ENCODE measurements at regions of chr12 and their contacts with region 1.

Region 1: DNA sequence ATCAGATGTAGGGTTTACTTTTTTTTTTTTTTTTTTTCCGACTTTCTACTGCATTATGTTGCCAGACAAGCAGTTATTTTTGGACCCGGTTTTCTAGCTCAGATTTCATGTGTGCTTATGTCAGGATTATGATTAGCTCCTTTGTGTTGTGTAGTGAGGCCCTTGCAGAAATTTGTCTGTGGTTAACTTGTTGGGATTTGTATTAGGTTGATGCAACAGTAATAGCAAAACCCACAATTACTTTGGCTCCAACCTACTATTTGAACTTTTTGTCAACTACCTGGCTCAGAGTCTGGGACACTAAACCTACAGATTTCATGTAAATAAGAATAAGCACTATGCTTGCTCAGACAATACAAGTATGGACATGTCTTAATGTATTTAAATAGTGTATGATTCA is 44.1 kb upstream of the KCNJ8 start:
- DNase-seq: peak; percentile 67
- H3K4me3 Mint-ChIP-seq: no peak overlapping the region
- H3K27ac Mint-ChIP-seq: peak overlapping the region; percentile 50
- H3K4me1 Mint-ChIP-seq: peaks cover 16% of the 10 kb centered on the region
- H3K27me3 Mint-ChIP-seq: peaks cover 3% of the 10 kb centered on the region
- CTCF ChIP-seq: no peak

Region 2: GRCh38 chr12:21865846-21866245 is 47.2 kb after region 1 on chr12:
- CTCF ChIA-PET with region 1: no interaction called
- POLR2A ChIA-PET with region 1: no interaction called
- intact Hi-C with region 1: loop called (anchors 10 kb)
- DNase-seq: no peak
- H3K4me3 Mint-ChIP-seq: no peak overlapping the region
- H3K27ac Mint-ChIP-seq: no peak overlapping the region
- H3K4me1 Mint-ChIP-seq: no peaks in the 10 kb centered on the region
- H3K27me3 Mint-ChIP-seq: no peaks in the 10 kb centered on the region
- CTCF ChIP-seq: no peak